Activated B cell treated with CpG ODN at 0.5 μM for 24 hours (primary cell): ENCODE measurements at regions of chr16 and their contacts with region 1.

Region 1: DNA sequence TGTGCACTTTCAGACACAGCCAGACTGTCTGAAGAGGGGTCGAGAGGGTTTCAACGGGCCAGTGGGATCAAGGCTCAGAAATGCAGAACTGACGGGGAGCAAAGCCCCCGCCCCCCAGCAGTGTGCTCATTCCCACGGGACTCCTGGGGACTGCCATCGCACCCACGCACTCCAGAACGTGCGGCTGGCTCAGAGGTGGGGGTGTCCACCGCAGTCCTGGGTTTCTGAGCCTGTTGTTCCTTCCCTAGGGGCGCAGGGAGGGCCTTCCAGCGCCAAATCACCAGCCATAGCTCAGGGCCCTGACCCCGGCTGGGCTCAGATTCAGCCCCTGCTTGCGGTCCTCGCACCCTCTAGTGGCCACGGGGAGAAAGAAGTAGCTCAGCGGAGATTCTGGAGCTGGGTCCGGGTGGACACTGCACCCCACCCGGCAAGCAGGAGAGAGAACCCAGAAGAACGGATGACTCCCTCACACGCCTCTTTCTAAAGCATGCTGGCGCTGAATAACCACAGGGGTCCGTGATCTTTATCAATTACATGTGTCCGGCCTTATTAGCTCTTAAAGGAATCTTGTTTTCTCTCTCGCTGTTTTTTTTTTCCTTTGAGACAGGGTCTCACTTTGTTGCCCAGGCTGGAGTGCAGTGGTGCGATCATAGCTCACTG is 45.0 kb upstream of the USP7 start:
- DNase-seq: peak; percentile 50
- ATAC-seq: peak; percentile 91
- H3K4me3 Mint-ChIP-seq: peak overlapping the region; percentile 59
- H3K27ac Mint-ChIP-seq: peak overlapping the region; percentile 53
- H3K4me1 Mint-ChIP-seq: peaks cover 8% of the 10 kb centered on the region
- H3K27me3 Mint-ChIP-seq: peaks cover 29% of the 10 kb centered on the region
- CTCF ChIP-seq: no peak

Region 2: DNA sequence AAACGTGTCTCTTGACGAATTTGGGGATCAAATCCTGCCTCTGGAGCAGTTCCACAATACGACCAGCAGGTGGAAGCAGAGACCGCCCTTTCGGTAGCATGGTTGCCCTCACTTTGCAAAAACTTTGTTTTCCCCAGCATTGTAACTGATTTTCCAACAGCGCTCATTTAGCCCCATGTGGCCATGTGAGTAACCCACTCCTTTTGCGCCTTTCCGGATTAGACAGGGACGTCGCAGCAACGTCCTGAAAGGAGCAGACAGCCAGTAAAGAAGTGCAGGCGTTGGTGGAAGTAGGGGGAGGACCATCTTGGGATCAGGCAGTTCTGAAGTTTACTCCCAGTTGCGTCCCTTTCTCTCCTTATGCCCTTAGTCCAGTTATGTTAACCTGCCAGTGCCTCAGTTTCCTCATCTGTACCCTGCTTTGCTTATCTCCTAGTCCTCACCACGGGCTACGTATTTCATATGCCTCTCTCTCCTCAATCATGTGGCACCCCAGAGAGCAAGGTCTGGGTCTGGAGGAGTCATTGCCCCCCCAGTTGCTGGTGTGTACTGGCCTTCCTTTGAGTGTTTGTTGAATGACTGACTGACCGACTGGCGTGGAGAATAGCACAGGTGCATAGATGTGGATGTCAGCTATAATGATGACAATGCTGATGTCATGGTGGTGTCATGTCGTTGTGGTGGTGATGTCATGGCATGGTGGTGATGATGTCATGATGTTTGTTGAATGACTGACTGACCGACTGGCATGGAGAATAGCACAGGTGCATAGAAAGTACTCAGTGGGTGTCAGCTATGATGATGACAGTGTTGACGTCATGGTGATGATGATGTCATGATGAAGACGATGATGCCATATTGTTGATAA is 440.7 kb before region 1 on chr16:
- CTCF ChIA-PET with region 1: no interaction called
- POLR2A ChIA-PET with region 1: no interaction called
- intact Hi-C with region 1: loop called (anchors 1 kb)
- DNase-seq: peak; percentile 64
- ATAC-seq: peak; percentile 94
- H3K4me3 Mint-ChIP-seq: no peak overlapping the region
- H3K27ac Mint-ChIP-seq: no peak overlapping the region
- H3K4me1 Mint-ChIP-seq: peaks cover 3% of the 10 kb centered on the region
- H3K27me3 Mint-ChIP-seq: peaks cover 8% of the 10 kb centered on the region
- CTCF ChIP-seq: peak; percentile 88

Region 3: GRCh38 chr16:8885674-8886592 is 122.8 kb before region 1 on chr16:
- CTCF ChIA-PET with region 1: interaction called, 15 read pairs
- POLR2A ChIA-PET with region 1: interaction called, 17 read pairs
- intact Hi-C with region 1: loop called (anchors 1 kb)
- DNase-seq: no peak
- ATAC-seq: peak; percentile 22
- H3K4me3 Mint-ChIP-seq: no peak overlapping the region
- H3K27ac Mint-ChIP-seq: peak overlapping the region; percentile 19
- H3K4me1 Mint-ChIP-seq: peaks cover 24% of the 10 kb centered on the region
- H3K27me3 Mint-ChIP-seq: peaks cover 10% of the 10 kb centered on the region
- CTCF ChIP-seq: no peak

Region 4: DNA sequence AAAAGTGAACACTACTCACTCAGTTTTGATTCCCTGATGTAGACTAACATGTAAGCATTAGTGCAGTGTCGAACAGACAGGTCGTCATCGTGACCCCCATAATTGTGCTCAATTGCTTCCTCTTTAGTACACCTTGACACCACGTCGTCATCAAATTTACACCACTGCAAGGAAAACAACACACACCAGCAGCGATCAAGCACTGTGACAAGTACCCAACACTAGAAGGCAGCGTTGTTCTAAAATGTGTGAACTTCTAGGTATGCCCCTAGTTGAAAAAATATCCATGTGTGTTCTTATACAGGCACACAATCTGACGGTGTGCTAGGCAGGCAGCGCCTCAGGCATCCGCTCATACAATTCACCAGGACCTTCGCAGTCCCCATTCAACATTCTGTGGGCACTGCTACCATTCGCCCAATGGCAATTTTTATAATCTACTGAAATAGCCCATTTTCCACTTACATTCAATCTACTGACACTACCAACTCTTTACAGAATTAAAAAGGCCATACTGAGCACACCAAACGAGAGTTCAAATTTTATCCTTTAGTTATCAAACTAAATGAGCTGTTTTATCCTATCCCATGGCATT is 103.5 kb before region 1 on chr16:
- CTCF ChIA-PET with region 1: interaction called, 7 read pairs
- POLR2A ChIA-PET with region 1: no interaction called
- intact Hi-C with region 1: loop called (anchors 1 kb)
- DNase-seq: no peak
- ATAC-seq: peak; percentile 68
- H3K4me3 Mint-ChIP-seq: no peak overlapping the region
- H3K27ac Mint-ChIP-seq: no peak overlapping the region
- H3K4me1 Mint-ChIP-seq: no peaks in the 10 kb centered on the region
- H3K27me3 Mint-ChIP-seq: no peaks in the 10 kb centered on the region
- CTCF ChIP-seq: no peak

Region 5: GRCh38 chr16:8958344-8959167 is 50.2 kb before region 1 on chr16:
- CTCF ChIA-PET with region 1: interaction called, 3 read pairs
- POLR2A ChIA-PET with region 1: interaction called, 6 read pairs
- intact Hi-C with region 1: loop called (anchors 1 kb)
- DNase-seq: no peak
- ATAC-seq: no peak
- H3K4me3 Mint-ChIP-seq: peak overlapping the region; percentile 64
- H3K27ac Mint-ChIP-seq: peak overlapping the region; percentile 62
- H3K4me1 Mint-ChIP-seq: peaks cover 82% of the 10 kb centered on the region
- H3K27me3 Mint-ChIP-seq: no peaks in the 10 kb centered on the region
- CTCF ChIP-seq: no peak